Endothelial cell of umbilical vein (primary cell): ENCODE measurements at regions of chr16 and their contacts with region 1.

Region 1: GRCh38 chr16:56866943-56867830 is 2.2 kb downstream of the SLC12A3 start:
- DNase-seq: peak; percentile 57
- H3K4me3 ChIP-seq: no peak overlapping the region
- H3K27ac ChIP-seq: no peak overlapping the region
- H3K4me1 ChIP-seq: no peaks in the 10 kb centered on the region
- H3K27me3 ChIP-seq: no peaks in the 10 kb centered on the region
- CTCF ChIP-seq: peak; percentile 55 to 56
- POLR2A ChIP-seq: no peak

Region 2: GRCh38 chr16:56576585-56577293 is 290.4 kb before region 1 on chr16:
- CTCF ChIA-PET with region 1: no interaction called
- POLR2A ChIA-PET with region 1: no interaction called
- dilution Hi-C with region 1: no loop called
- intact Hi-C with region 1: loop called (anchors 1 kb)
- DNase-seq: peak; percentile 64
- H3K4me3 ChIP-seq: no peak overlapping the region
- H3K27ac ChIP-seq: no peak overlapping the region
- H3K4me1 ChIP-seq: no peaks in the 10 kb centered on the region
- H3K27me3 ChIP-seq: peaks cover 0 to 9% of the 10 kb centered on the region in 2 experiments
- CTCF ChIP-seq: peak; percentile 86 to 91
- POLR2A ChIP-seq: no peak

Region 3: GRCh38 chr16:56851671-56852400 is 15.4 kb before region 1 on chr16:
- CTCF ChIA-PET with region 1: interaction called, 14 read pairs
- POLR2A ChIA-PET with region 1: no interaction called
- dilution Hi-C with region 1: no loop called
- intact Hi-C with region 1: no loop called
- DNase-seq: peak; percentile 22
- H3K4me3 ChIP-seq: no peak overlapping the region
- H3K27ac ChIP-seq: no peak overlapping the region
- H3K4me1 ChIP-seq: peaks cover 32% of the 10 kb centered on the region
- H3K27me3 ChIP-seq: no peaks in the 10 kb centered on the region
- CTCF ChIP-seq: peak; percentile 34 to 44
- POLR2A ChIP-seq: no peak

Region 4: GRCh38 chr16:56950881-56951771 is 83.9 kb after region 1 on chr16:
- CTCF ChIA-PET with region 1: interaction called, 19 read pairs
- POLR2A ChIA-PET with region 1: no interaction called
- dilution Hi-C with region 1: no loop called
- intact Hi-C with region 1: loop called (anchors 1 kb)
- DNase-seq: peak; percentile 59
- H3K4me3 ChIP-seq: no peak overlapping the region
- H3K27ac ChIP-seq: no peak overlapping the region
- H3K4me1 ChIP-seq: no peaks in the 10 kb centered on the region
- H3K27me3 ChIP-seq: no peaks in the 10 kb centered on the region
- CTCF ChIP-seq: peak; percentile 63 to 76
- POLR2A ChIP-seq: no peak

Region 5: GRCh38 chr16:57167953-57168352 is 300.8 kb after region 1 on chr16:
- CTCF ChIA-PET with region 1: no interaction called
- POLR2A ChIA-PET with region 1: no interaction called
- dilution Hi-C with region 1: no loop called
- intact Hi-C with region 1: loop called (anchors 1 kb)
- DNase-seq: peak; percentile 83
- H3K4me3 ChIP-seq: no peak overlapping the region
- H3K27ac ChIP-seq: no peak overlapping the region
- H3K4me1 ChIP-seq: no peaks in the 10 kb centered on the region
- H3K27me3 ChIP-seq: no peaks in the 10 kb centered on the region
- CTCF ChIP-seq: peak; percentile 50 to 51
- POLR2A ChIP-seq: no peak